ENCODE measurements at regions of chr6 and their contacts with region 1.

Region 1: GRCh38 chr6:30556066-30556905 is at the start of gene GNL1:
- DNase-seq: peak; percentile 97
- H3K4me3 ChIP-seq: peak within 1 kb of the TSS; percentile 84 to 96 (median 89)
- H3K27ac ChIP-seq: peak within 1 kb of the TSS; percentile 98 to 100 (median 98)
- H3K4me1 ChIP-seq: peaks cover 19 to 39% (median 30%) of the 10 kb centered on the region in 4 donors
- H3K27me3 ChIP-seq: no peaks in the 10 kb centered on the region
- CTCF ChIP-seq: no peak
- EP300 ChIP-seq: no peak
- POLR2A ChIP-seq: peak; percentile 32
- total RNA-seq, gene GNL1: 30.3 to 53.5 (median 36.1) TPM

Region 2: GRCh38 chr6:30571075-30571768 is 14.9 kb after region 1 on chr6 and contains the start of gene ABCF1:
- intact Hi-C with region 1: loop called (anchors 2 kb)
- DNase-seq: peak; percentile 99
- H3K4me3 ChIP-seq: peak within 1 kb of the TSS; percentile 76 to 85 (median 77)
- H3K27ac ChIP-seq: peak within 1 kb of the TSS; percentile 88 to 92 (median 92)
- H3K4me1 ChIP-seq: peaks cover 25 to 53% (median 40%) of the 10 kb centered on the region in 4 donors
- H3K27me3 ChIP-seq: no peaks in the 10 kb centered on the region
- CTCF ChIP-seq: peak in 1 of 3 experiments; percentile 21
- EP300 ChIP-seq: no peak
- POLR2A ChIP-seq: peak; percentile 39
- total RNA-seq, gene ABCF1: 39.0 to 60.8 (median 51.4) TPM

Region 3: DNA sequence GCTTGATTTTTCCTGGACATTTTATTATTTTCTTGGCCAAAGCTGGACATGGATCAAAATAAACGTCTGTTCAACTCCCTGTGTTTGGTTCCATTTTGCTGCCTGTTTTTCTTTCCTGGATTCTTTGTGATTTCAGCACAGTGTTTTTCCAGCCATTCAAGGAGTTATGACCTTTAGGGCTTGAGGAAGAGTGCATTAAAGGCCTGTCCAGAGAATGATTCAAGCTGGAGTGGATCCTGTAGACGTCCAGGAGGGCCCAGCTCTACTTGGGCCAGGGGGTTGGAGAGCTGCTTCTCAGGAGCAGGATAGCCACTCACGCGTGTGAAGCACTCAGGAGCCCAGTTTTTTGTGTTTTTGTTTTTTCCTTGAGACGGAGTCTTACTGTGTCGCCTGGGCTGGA is 244.6 kb after region 1 on chr6:
- intact Hi-C with region 1: no loop called
- DNase-seq: no peak
- H3K4me3 ChIP-seq: no peak overlapping the region
- H3K27ac ChIP-seq: peak overlapping the region in 3 of 4 donors; percentile 23 to 50 (median 30)
- H3K4me1 ChIP-seq: peaks cover 0 to 6% (median 0%) of the 10 kb centered on the region in 4 donors
- H3K27me3 ChIP-seq: no peaks in the 10 kb centered on the region
- CTCF ChIP-seq: no peak
- EP300 ChIP-seq: no peak
- POLR2A ChIP-seq: no peak

Region 4: GRCh38 chr6:30981942-30982772 is 425.9 kb after region 1 on chr6:
- intact Hi-C with region 1: no loop called
- DNase-seq: no peak
- H3K4me3 ChIP-seq: peak overlapping the region in 1 of 4 donors; percentile 7
- H3K27ac ChIP-seq: no peak overlapping the region
- H3K4me1 ChIP-seq: peaks cover 0 to 11% (median 5%) of the 10 kb centered on the region in 4 donors
- H3K27me3 ChIP-seq: peaks cover 0 to 41% (median 0%) of the 10 kb centered on the region in 4 donors
- CTCF ChIP-seq: no peak
- EP300 ChIP-seq: no peak
- POLR2A ChIP-seq: no peak

Measured in esophagus muscularis mucosa (tissue), 4 donors.